ENCODE measurements at regions of chr4 and their contacts with region 1.

Region 1: GRCh38 chr4:163332500-163333406 is at the start of gene NPY1R:
- DNase-seq: peak in 4 of 14 experiments; percentile 2 to 29 (median 18)
- ATAC-seq: no peak
- H3K4me3 ChIP-seq: no peak within 1 kb of the TSS
- H3K4me3 Mint-ChIP-seq: peak within 1 kb of the TSS; percentile 22
- H3K27ac ChIP-seq: no peak within 1 kb of the TSS
- H3K27ac Mint-ChIP-seq: no peak within 1 kb of the TSS
- H3K4me1 ChIP-seq: peaks cover 12% of the 10 kb centered on the region
- H3K4me1 Mint-ChIP-seq: peaks cover 15% of the 10 kb centered on the region
- H3K27me3 ChIP-seq: peaks cover 21 to 39% of the 10 kb centered on the region in 2 experiments
- H3K27me3 Mint-ChIP-seq: peaks cover 68% of the 10 kb centered on the region
- CTCF ChIP-seq: no peak
- total RNA-seq, gene NPY1R: not detected

Region 2: GRCh38 chr4:162497564-162498167 is 835.1 kb before region 1 on chr4:
- CTCF ChIA-PET with region 1: no interaction called
- POLR2A ChIA-PET with region 1: no interaction called
- intact Hi-C with region 1: loop called in 1 of 2 experiments (anchors 5 kb)
- DNase-seq: peak in 3 of 14 experiments; percentile 38 to 54 (median 52)
- ATAC-seq: peak; percentile 52
- H3K4me3 ChIP-seq: no peak overlapping the region
- H3K4me3 Mint-ChIP-seq: no peak overlapping the region
- H3K27ac ChIP-seq: no peak overlapping the region
- H3K27ac Mint-ChIP-seq: no peak overlapping the region
- H3K4me1 ChIP-seq: no peaks in the 10 kb centered on the region
- H3K4me1 Mint-ChIP-seq: no peaks in the 10 kb centered on the region
- H3K27me3 ChIP-seq: no peaks in the 10 kb centered on the region
- H3K27me3 Mint-ChIP-seq: peaks cover 10% of the 10 kb centered on the region
- CTCF ChIP-seq: peak; percentile 72

Region 3: DNA sequence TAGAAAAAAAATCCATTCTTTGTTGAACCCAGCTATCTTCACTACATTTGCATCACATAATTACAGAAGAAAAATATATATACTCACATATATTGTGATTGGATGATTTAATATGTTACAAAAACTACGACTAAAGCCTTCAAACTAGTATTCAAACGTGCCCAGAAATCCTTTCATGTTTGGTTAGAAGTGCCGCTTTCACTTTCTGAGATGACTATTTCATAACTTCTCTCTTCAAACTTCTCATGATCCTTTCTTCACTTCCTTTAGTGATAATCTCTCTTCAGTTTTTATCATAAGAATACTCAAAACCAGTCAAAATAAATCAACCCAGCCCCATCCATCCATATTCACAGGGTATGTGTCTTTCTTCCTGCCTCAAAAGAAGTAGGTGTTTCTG is 115.2 kb before region 1 on chr4:
- CTCF ChIA-PET with region 1: no interaction called
- POLR2A ChIA-PET with region 1: no interaction called
- intact Hi-C with region 1: no loop called
- DNase-seq: no peak
- ATAC-seq: no peak
- H3K4me3 ChIP-seq: no peak overlapping the region
- H3K4me3 Mint-ChIP-seq: no peak overlapping the region
- H3K27ac ChIP-seq: no peak overlapping the region
- H3K27ac Mint-ChIP-seq: no peak overlapping the region
- H3K4me1 ChIP-seq: no peaks in the 10 kb centered on the region
- H3K4me1 Mint-ChIP-seq: no peaks in the 10 kb centered on the region
- H3K27me3 ChIP-seq: peaks cover 0 to 13% of the 10 kb centered on the region in 2 experiments
- H3K27me3 Mint-ChIP-seq: peaks cover 6% of the 10 kb centered on the region
- CTCF ChIP-seq: no peak

Region 4: GRCh38 chr4:163284304-163284703 is 48.4 kb before region 1 on chr4:
- CTCF ChIA-PET with region 1: no interaction called
- POLR2A ChIA-PET with region 1: no interaction called
- intact Hi-C with region 1: no loop called
- DNase-seq: no peak
- ATAC-seq: no peak
- H3K4me3 ChIP-seq: no peak overlapping the region
- H3K4me3 Mint-ChIP-seq: no peak overlapping the region
- H3K27ac ChIP-seq: no peak overlapping the region
- H3K27ac Mint-ChIP-seq: no peak overlapping the region
- H3K4me1 ChIP-seq: no peaks in the 10 kb centered on the region
- H3K4me1 Mint-ChIP-seq: no peaks in the 10 kb centered on the region
- H3K27me3 ChIP-seq: no peaks in the 10 kb centered on the region
- H3K27me3 Mint-ChIP-seq: peaks cover 16% of the 10 kb centered on the region
- CTCF ChIP-seq: no peak